Calu3 (cell line): ENCODE measurements at regions of chr17 and their contacts with region 1.

Region 1: GRCh38 chr17:32319548-32319905 is 22.4 kb downstream of the C17orf75 start:
- DNase-seq: peak; percentile 86
- H3K4me3 Mint-ChIP-seq: no peak overlapping the region
- H3K27ac Mint-ChIP-seq: no peak overlapping the region
- H3K4me1 Mint-ChIP-seq: no peaks in the 10 kb centered on the region
- H3K27me3 Mint-ChIP-seq: peaks cover 37% of the 10 kb centered on the region
- CTCF ChIP-seq: peak; percentile 92

Region 2: GRCh38 chr17:32253117-32253611 is 66.4 kb before region 1 on chr17:
- CTCF ChIA-PET with region 1: interaction called, 6 read pairs
- intact Hi-C with region 1: loop called (anchors 1 kb)
- DNase-seq: peak; percentile 79
- H3K4me3 Mint-ChIP-seq: no peak overlapping the region
- H3K27ac Mint-ChIP-seq: no peak overlapping the region
- H3K4me1 Mint-ChIP-seq: no peaks in the 10 kb centered on the region
- H3K27me3 Mint-ChIP-seq: peaks cover 40% of the 10 kb centered on the region
- CTCF ChIP-seq: peak; percentile 89

Region 3: GRCh38 chr17:32265192-32265923 is 54.2 kb before region 1 on chr17 and contains the start of gene RHBDL3:
- CTCF ChIA-PET with region 1: no interaction called
- intact Hi-C with region 1: no loop called
- DNase-seq: no peak
- H3K4me3 Mint-ChIP-seq: peak within 1 kb of the TSS; percentile 62
- H3K27ac Mint-ChIP-seq: no peak within 1 kb of the TSS
- H3K4me1 Mint-ChIP-seq: peaks cover 28% of the 10 kb centered on the region
- H3K27me3 Mint-ChIP-seq: peaks cover 94% of the 10 kb centered on the region
- CTCF ChIP-seq: no peak
- total RNA-seq, gene RHBDL3: 0.24 and 0.27 TPM in 2 replicates

Region 4: DNA sequence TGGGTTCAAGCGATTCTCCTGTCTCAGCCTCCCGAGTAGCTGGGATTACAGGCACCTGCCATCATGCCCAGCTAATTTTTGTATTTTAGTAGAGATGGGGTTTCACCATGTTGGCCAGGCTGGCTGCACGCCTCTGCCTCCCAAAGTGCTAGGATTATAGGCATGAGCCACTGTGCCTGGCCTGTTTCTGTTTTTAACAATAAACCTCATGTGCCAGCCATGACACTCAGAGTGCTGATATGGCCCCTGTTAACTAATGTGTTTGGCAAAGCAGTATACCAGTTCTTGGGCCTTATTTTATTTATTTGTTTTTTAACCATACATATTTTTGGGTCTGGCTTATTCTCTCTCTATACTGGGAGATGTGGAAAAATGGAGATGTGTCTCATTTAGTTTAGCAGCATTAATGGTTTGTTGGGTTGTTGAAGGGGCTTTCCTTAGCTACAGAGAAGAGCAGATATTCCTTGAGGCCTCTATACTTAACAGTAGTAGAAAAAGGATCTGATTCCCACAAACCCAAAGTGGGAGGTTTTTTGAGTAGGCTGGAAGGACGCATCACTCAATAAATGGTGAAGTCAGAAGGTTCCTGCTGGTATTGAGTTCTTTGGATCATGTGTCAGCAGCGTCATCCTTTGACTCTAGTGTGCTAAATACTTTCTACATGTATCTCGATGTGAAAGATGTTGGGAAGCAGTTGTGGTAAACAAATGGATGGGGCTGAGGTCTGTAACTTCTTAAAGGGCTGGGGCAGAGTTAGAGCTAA is 151.1 kb after region 1 on chr17:
- CTCF ChIA-PET with region 1: no interaction called
- intact Hi-C with region 1: no loop called
- DNase-seq: no peak
- H3K4me3 Mint-ChIP-seq: no peak overlapping the region
- H3K27ac Mint-ChIP-seq: no peak overlapping the region
- H3K4me1 Mint-ChIP-seq: no peaks in the 10 kb centered on the region
- H3K27me3 Mint-ChIP-seq: no peaks in the 10 kb centered on the region
- CTCF ChIP-seq: no peak